Posterior vena cava (tissue), 2 donors: ENCODE measurements at regions of chr20 and their contacts with region 1.

Region 1: GRCh38 chr20:47551841-47552240 is 50.2 kb downstream of the NCOA3 start:
- DNase-seq: no peak

Region 2: DNA sequence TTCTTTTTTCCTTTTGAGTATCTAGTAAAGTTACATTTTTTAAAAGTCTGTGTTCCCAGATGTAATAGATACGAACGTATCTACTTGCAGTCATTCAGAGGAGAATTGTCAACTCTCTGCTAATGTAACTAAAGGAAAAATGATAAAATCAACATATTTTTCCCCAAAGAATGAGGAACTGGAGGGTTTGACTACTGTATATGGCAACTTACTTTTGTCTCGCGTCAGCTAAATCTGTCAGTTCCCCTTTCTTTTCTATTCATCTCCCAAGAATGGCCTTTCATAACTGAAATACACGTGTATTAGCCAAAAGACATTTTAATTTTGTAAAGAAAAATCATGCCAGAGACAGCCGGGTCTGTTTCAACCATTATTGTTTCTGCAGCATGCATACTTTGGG is 651.8 kb before region 1 on chr20:
- intact Hi-C with region 1: loop called in 1 of 2 experiments (anchors 5 kb)
- DNase-seq: no peak

Region 3: DNA sequence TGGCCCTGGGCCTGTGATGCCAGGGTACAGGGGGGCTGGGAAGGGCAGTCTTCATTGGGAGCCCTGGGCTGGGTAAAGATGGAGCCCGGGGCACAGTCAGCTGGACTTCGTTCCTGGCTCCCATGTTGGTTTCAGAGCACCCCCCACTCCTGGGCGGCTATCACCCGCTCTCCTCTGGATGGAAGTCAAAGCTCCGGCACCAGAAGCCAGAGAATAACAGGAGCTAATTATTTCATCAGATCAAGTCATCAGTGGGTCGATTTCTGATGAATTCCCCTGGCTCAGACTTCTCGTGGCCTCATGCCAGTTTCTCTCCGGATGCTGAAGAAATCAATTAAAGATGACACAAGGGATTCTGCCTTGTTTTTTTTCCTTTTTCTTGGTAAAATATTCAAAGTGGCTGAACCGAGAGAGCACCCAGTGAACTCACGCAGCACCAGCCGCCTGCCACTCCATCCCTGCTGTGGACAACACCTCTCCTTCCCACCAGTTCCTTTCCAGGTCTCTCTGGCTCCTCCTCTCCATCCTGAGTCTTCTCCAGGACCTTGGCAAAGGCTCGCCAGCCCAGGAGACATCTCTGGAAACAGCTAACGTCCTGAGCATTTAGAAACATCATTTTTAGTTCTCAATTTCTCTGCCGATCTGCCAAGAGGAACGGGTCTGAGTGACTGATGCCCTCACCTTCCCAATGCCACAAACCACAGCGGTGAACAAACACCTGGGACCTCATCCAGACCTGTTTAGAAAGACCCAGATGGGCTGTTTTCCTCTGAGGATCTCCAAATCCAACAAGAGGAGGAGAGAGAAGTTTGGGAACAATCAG is 211.0 kb after region 1 on chr20:
- intact Hi-C with region 1: no loop called
- DNase-seq: no peak